Left colon (tissue), 2 donors: ENCODE measurements at regions of chr11 and their contacts with region 1.

Region 1: GRCh38 chr11:102341844-102342318 is 5.1 kb upstream of the BIRC2 start:
- DNase-seq: peak; percentile 74 to 80
- ATAC-seq: peak; percentile 79

Region 2: DNA sequence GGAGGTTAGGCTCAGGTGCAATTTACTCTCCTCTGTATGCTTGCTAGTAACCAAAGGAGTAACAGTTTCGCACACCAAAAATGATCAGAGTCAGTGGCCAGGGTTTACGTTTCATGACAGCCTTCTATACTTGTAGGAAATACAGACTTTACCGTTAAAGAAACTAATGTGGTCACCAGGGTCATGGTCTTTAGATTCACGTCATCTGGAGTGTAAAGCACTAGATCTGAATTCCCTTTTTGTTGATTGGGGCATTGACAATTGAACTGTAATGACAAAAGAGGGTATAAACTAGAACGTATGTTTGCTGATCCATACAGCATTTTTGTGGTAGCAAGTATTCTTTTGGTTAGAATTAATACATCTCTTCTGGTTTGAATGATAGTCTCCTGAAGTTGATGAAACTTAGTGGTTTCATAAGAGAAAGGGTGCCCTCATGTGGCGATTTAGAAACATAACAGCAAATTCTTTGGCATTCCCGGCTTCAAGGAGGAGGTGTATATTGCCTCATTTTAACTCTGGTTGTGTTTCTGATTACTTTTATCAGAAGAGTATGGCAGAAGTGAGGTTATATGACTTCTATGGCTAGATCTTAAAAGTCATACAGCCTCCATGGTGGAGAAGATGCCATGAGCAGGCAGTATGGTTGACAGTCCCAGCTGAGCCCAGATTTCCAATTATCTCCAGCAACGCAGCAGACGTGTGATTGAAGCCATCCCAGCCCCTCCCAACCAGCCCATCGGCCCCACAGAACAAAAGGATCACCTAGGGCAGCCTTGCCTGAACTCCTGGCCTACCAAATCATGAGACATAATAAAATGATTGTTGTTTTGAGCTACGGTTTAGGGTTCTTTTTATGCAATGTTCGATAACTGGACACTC is 153.5 kb after region 1 on chr11:
- intact Hi-C with region 1: loop called in 1 of 2 experiments (anchors 5 kb)
- DNase-seq: no peak
- ATAC-seq: peak; percentile 86

Region 3: DNA sequence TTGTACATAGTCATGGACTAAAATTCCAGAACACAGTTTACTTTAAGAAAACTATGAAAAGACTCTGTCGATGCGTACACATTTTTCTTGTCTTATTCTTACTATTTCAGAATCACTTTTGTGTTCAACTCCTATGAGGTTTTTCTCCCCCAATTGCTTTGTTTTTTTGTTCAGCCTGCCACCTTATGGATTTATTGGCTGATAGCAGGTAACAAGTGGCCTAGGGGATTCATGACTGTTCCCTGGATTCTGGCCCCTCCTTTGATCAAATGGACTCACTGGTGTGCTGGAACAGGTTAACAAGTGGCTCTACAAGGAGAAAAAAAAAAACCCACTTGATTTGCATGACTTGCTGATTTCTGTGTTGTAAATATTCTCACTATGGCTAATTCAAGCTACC is 272.6 kb after region 1 on chr11:
- intact Hi-C with region 1: loop called in 1 of 2 experiments (anchors 5 kb)
- DNase-seq: no peak
- ATAC-seq: no peak